Psoas muscle (tissue), 8 donors: ENCODE measurements at regions of chr2 and their contacts with region 1.

Region 1: GRCh38 chr2:20097879-20098714 is 46.7 kb upstream of the LAPTM4A start:
- DNase-seq: peak; percentile 80 to 90
- ATAC-seq: peak; percentile 88 to 93 (median 90)
- H3K4me3 ChIP-seq: no peak overlapping the region
- H3K27ac ChIP-seq: no peak overlapping the region
- H3K4me1 ChIP-seq: peaks cover 6% of the 10 kb centered on the region
- H3K27me3 ChIP-seq: no peaks in the 10 kb centered on the region
- CTCF ChIP-seq: peak; percentile 88

Region 2: DNA sequence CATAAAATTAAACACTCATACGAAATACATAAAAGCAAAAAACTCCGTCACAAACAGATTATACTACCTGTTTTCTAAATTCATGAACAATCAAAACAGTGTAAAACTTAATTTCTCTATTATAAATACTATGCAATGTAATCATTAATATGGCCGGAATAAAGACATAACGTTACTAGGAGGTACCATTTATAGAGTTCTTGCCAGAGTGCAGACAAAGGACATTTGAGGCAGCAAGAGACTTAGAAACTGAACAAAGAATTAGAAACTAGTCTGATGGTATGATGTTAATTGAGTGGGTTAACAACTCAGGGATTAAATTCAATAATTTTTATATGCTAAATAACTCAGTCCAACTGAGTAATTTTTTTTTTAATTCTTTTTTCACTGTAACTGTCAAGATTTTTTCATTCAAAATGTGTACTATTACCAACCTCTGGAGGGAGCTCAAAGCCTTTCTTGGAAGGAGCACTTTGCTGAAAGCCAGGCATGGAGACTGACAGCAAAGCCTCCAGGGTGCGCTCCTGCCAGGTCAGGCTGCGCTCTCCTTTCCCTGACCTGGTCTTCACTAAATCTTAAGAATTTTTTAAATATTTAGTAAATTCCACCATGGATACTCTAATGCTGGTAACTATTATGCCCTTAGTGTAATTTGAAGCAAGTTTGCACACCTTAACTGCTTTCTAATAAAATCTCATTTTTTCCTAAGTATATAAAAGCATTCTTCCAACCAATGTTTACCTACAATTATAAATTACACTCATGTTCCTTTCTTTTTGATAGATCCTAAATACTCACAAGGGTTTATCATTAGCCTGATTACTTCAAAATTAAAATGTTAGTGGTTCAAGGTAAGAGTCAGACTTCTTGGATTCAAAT is 142.3 kb before region 1 on chr2:
- intact Hi-C with region 1: loop called (anchors 1 to 2 kb)
- DNase-seq: peak; percentile 27 to 62
- ATAC-seq: peak; percentile 68 to 92 (median 86)
- H3K4me3 ChIP-seq: no peak overlapping the region
- H3K27ac ChIP-seq: no peak overlapping the region
- H3K4me1 ChIP-seq: no peaks in the 10 kb centered on the region
- H3K27me3 ChIP-seq: no peaks in the 10 kb centered on the region
- CTCF ChIP-seq: peak; percentile 69

Region 3: DNA sequence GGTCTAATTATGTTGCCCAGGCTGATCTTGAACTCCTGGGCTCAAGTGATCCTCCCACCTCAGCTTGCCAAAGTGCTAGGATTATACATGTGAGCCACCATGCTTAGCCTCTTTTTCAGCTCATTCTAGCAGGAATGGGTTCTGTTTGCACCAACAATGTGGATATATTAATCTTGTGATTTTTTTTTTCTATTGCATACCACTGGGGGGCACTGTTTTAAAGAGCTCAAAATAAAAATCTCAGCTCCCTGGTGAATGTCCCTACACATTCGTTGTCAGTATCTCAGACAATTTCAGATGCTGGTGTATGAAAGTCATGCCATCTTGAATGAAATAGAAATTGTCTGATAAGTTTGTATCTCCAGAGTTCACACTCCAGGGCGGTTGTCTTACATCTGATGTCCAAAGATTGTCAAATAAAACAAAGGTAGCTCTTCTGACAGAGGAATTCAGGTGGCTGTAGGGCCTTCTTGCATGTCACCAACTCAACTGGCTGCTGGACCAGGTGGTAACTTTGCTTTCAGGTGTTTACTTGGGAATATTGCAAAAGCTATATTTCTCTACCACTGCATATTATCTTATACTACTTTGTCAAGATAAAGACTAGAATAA is 82.5 kb before region 1 on chr2:
- intact Hi-C with region 1: loop called (anchors 1 to 2 kb)
- DNase-seq: no peak
- ATAC-seq: peak in 2 of 4 donors; percentile 62 to 75
- H3K4me3 ChIP-seq: no peak overlapping the region
- H3K27ac ChIP-seq: no peak overlapping the region
- H3K4me1 ChIP-seq: peaks cover 3% of the 10 kb centered on the region
- H3K27me3 ChIP-seq: peaks cover 0 to 14% (median 4%) of the 10 kb centered on the region in 3 donors
- CTCF ChIP-seq: peak; percentile 56

Region 4: GRCh38 chr2:20051532-20052228 is 46.4 kb before region 1 on chr2 and contains the start of gene LAPTM4A:
- intact Hi-C with region 1: loop called (anchors 2 to 5 kb)
- DNase-seq: peak; percentile 98 to 99
- ATAC-seq: peak; percentile 97 to 99 (median 98)
- H3K4me3 ChIP-seq: peak within 1 kb of the TSS; percentile 71
- H3K27ac ChIP-seq: peak within 1 kb of the TSS; percentile 98
- H3K4me1 ChIP-seq: peaks cover 33% of the 10 kb centered on the region
- H3K27me3 ChIP-seq: no peaks in the 10 kb centered on the region
- CTCF ChIP-seq: peak; percentile 20
- total RNA-seq, gene LAPTM4A: 68.2 to 78.8 (median 70.5) TPM

Region 5: GRCh38 chr2:20141122-20141762 is 43.1 kb after region 1 on chr2:
- intact Hi-C with region 1: no loop called
- DNase-seq: peak; percentile 86 to 93
- ATAC-seq: peak; percentile 79 to 98 (median 92)
- H3K4me3 ChIP-seq: no peak overlapping the region
- H3K27ac ChIP-seq: no peak overlapping the region
- H3K4me1 ChIP-seq: no peaks in the 10 kb centered on the region
- H3K27me3 ChIP-seq: no peaks in the 10 kb centered on the region
- CTCF ChIP-seq: no peak

Region 6: GRCh38 chr2:20254731-20255130 is 156.6 kb after region 1 on chr2:
- intact Hi-C with region 1: no loop called
- DNase-seq: no peak
- ATAC-seq: no peak
- H3K4me3 ChIP-seq: no peak overlapping the region
- H3K27ac ChIP-seq: no peak overlapping the region
- H3K4me1 ChIP-seq: no peaks in the 10 kb centered on the region
- H3K27me3 ChIP-seq: no peaks in the 10 kb centered on the region
- CTCF ChIP-seq: no peak